ENCODE measurements at regions of chr11 and their contacts with region 1.

Region 1: DNA sequence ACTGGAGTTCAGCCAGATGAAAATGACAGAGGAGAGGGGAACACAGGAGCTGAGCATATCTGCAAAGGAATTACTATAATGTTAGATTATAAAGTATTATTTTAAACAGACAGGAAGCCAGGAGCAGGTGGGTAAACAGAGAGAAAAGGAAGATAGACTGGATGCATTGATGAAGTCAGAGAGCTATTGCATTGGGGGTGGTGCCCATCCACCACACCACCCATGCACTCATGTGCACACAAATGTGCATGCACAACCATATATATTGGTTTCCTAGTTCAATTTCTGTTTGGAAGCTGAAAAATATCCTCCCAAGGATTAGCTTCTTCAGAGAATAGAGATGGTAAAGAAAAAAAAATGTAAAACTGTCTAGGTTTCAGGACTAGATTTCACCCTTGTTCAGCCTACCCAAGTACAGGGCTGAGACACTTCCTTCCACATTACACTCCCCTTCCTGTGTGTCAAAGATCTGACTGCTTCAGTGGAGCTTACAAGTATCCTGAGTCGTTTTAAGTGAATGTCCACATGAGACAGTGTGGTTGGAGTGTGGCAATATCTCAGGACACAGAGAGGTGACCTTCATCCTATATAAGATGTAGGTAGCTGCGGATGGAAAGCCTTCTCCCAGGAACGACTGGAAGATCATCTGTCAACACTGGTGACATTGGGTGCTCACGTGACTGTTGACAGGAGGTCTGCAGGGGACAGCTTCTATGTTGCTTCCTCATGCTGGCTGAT is 12.2 kb upstream of the SMPD1 start:
- DNase-seq: peak; percentile 34
- H3K4me3 Mint-ChIP-seq: peak overlapping the region; percentile 61
- H3K27ac Mint-ChIP-seq: peak overlapping the region; percentile 93
- H3K4me1 Mint-ChIP-seq: peaks cover 37% of the 10 kb centered on the region
- H3K27me3 Mint-ChIP-seq: peaks cover 4% of the 10 kb centered on the region

Region 2: DNA sequence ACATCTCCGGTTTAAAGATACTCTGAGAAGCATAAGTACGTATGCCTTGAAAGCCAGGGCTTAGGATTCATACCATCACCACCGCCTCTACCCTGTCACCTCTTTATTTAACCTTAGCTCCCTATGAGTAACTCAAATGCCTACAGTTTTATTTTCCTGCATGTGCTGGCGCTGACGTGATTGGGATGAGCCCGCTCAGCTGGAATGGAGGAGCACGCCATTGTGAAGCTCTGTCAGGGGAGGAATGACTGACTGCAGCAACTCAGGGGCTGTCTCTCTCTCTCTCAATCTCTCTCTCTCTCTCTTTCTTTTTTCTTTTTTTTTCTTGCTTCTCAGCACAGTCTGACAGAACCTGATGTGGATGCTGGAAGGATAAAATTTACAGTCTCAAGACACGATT is 70.2 kb before region 1 on chr11:
- CTCF ChIA-PET with region 1: no interaction called
- DNase-seq: no peak
- H3K4me3 Mint-ChIP-seq: no peak overlapping the region
- H3K27ac Mint-ChIP-seq: no peak overlapping the region
- H3K4me1 Mint-ChIP-seq: no peaks in the 10 kb centered on the region
- H3K27me3 Mint-ChIP-seq: peaks cover 30% of the 10 kb centered on the region

Region 3: GRCh38 chr11:6389921-6390724 is 12.1 kb after region 1 on chr11 and contains the start of gene SMPD1:
- CTCF ChIA-PET with region 1: interaction called, 45 read pairs
- DNase-seq: peak; percentile 96
- H3K4me3 Mint-ChIP-seq: peak within 1 kb of the TSS; percentile 94
- H3K27ac Mint-ChIP-seq: peak within 1 kb of the TSS; percentile 94
- H3K4me1 Mint-ChIP-seq: peaks cover 57% of the 10 kb centered on the region
- H3K27me3 Mint-ChIP-seq: no peaks in the 10 kb centered on the region

Region 4: DNA sequence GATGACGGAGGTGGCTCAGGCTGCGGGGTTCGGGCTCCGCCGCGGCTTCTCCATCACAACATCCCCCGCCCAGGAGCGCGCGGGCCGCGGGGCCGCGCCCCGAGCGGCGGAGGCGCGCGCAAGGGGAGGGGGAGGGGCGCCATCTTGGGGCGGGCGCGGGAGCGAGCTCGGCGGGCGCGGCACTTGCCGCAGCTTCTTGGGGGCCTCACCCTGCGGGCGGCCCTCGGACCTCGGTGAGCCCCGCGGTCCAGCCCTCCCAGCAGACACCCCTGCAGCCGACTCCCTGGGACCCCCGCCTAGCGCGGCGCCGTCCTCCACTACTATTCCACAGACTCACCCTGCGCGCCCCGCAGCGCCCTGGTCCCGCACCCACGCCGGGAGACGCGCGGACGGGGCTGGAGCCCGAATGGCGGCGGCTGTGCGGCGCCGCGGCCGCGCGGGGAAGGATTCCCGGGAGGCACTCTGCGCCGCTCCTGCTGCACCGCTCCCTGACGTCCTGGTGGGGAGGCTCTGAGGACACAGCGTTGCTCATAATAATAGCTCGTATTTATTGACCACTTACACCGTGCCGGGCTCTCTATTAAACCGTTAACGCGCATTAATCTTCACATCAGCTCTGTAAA is 41.0 kb after region 1 on chr11 and contains the start of gene APBB1:
- CTCF ChIA-PET with region 1: interaction called, 19 read pairs
- DNase-seq: peak; percentile 74
- H3K4me3 Mint-ChIP-seq: no peak within 1 kb of the TSS
- H3K27ac Mint-ChIP-seq: peak within 1 kb of the TSS; percentile 73
- H3K4me1 Mint-ChIP-seq: peaks cover 7% of the 10 kb centered on the region
- H3K27me3 Mint-ChIP-seq: peaks cover 37% of the 10 kb centered on the region

Region 5: GRCh38 chr11:6475968-6476367 is 97.9 kb after region 1 on chr11:
- CTCF ChIA-PET with region 1: interaction called, 21 read pairs
- DNase-seq: no peak
- H3K4me3 Mint-ChIP-seq: no peak overlapping the region
- H3K27ac Mint-ChIP-seq: no peak overlapping the region
- H3K4me1 Mint-ChIP-seq: peaks cover 43% of the 10 kb centered on the region
- H3K27me3 Mint-ChIP-seq: peaks cover 18% of the 10 kb centered on the region

Region 6: DNA sequence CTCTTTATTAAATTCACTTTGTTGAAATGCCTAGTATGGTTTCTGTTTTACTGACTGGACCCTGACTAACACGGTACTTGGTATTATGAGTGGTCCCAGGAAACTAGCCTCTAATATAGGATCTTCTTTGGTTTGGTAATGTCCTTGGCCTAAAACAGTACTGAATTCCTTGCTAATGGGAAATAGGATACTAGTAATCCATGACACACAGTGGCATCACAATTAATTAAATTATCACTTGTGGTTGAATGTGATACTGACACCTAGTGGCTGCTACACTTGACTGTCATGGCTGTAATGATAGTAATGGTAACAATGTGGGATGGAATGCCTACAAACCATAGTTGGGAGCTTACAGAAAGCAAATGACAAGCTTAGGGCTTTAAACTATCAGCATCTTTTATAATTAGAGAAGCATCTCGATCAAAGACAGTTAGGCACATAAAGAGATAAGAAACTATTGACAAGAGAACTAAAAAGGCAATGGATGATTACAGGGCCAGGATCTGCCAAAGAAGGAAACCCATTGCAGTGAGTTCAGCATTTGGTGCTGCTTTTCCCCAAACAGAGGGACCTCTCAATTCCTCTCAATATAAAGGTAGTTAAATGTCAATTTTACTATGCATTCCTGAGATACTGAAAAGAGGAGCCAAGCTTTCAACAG is 127.6 kb after region 1 on chr11:
- CTCF ChIA-PET with region 1: interaction called, 141 read pairs
- DNase-seq: no peak
- H3K4me3 Mint-ChIP-seq: no peak overlapping the region
- H3K27ac Mint-ChIP-seq: no peak overlapping the region
- H3K4me1 Mint-ChIP-seq: peaks cover 3% of the 10 kb centered on the region
- H3K27me3 Mint-ChIP-seq: no peaks in the 10 kb centered on the region

Region 7: DNA sequence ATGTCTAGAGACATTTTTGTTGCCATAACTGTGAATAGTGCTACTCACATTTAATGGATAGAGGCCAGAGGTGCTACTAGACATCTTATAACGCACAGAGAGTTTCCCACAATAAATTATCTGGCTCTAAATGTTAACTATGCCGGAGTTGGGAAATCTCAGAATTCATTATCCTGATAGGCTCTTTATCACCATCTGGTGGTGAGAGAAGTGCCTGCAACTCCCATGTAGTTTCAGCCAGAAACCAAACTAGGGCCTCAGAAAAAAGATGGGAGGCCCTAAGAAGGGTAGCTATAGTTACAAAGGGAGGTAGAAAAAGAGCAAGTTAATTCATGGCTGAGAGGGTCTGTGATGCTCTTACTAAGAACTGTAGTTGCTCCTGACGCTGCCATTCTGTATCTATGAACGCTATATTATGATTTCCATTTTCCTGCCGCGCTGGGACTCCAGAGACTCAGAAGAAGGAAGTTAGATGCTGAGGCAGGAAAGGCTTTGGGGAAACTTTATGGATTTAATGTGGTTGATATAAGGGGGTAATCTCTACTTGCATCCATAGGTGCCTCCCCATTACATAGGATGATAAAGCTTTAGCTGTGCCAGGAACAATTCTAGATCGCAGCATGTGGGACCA is 327.9 kb after region 1 on chr11:
- CTCF ChIA-PET with region 1: interaction called, 21 read pairs
- DNase-seq: peak; percentile 60
- H3K4me3 Mint-ChIP-seq: no peak overlapping the region
- H3K27ac Mint-ChIP-seq: peak overlapping the region; percentile 28
- H3K4me1 Mint-ChIP-seq: peaks cover 5% of the 10 kb centered on the region
- H3K27me3 Mint-ChIP-seq: no peaks in the 10 kb centered on the region